A549 (cell line): ENCODE measurements at regions of chr18 and their contacts with region 1.

Region 1: DNA sequence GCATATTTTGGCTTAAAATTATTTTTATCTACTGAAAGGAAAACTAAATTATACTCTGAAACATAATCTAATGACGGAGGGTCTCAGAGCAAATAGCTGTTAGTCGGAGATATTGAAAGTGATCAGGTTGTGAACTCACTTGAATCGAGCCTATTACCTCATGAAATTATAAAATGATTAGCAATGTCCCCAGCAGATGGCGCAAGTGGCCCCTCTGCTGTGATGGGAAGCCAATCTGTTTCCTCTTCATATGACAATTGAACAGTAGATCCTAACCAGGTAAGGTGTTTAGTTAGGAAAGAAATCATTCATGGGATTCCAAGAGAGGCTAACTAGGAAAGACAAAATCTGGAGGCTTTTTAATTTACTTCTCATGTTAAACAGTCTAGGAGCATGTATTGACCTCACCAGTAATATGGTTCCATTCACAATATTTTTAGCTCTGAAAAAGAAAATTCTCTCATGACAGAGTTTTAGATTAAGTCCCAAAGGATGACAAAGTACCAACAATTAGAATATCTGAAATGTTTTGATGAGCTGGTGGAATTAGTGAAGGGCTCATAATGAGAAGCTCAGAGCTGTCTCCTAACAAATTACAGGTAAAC is 29.9 kb upstream of the MPPE1 start:
- DNase-seq: peak; percentile 58 to 69
- ATAC-seq: peak; percentile 54 to 81; a peak in 4 of 6 replicates
- H3K4me3 ChIP-seq: no peak overlapping the region
- H3K27ac ChIP-seq: peak overlapping the region in 1 of 2 experiments; percentile 55; a peak in 2 of 6 replicates
- H3K4me1 ChIP-seq: peaks cover 6% of the 10 kb centered on the region; the same call in 1 of the 3 replicates
- CTCF ChIP-seq: peak; percentile 74
- EP300 ChIP-seq: no peak
- POLR2A ChIP-seq: no peak
- RAD21 ChIP-seq: peak; percentile 85 to 86

Region 2: DNA sequence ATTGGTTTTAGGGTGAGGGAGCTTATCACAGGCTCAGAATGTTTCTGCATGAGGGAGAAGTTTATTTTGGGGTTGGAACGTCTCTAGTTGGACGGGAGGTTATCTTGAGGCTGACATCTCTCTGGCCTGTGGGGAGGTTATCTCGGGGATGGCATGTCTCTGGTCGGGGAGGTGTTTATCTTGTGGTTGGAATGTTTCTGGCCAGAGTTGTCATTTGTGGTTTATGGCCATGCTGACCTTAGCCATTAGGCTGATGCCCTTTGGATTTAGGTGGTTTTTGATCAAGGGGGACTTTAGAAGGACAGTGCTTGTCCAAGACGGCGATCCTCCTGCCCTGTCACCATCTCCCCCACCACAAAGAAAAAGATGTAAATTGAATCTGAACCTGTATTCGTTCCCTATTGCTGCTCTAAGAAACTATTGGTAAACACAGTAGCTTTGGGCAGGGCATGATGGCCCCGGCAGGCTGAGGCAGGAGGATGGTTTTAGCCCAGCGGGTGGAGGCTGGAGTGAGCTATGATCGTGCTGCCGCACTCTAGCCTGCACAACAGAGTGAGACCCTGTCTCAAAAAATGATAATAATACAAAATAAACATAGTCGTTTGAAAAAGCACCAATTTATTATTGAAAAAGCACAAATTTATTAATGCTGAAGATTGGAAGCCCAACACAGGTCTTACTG is 12.0 kb before region 1 on chr18:
- CTCF ChIA-PET with region 1: interaction called, 73 read pairs
- POLR2A ChIA-PET with region 1: interaction called, 3 read pairs
- DNase-seq: no peak
- ATAC-seq: no peak
- H3K4me3 ChIP-seq: no peak overlapping the region
- H3K27ac ChIP-seq: no peak overlapping the region
- H3K4me1 ChIP-seq: no peaks in the 10 kb centered on the region
- CTCF ChIP-seq: no peak
- EP300 ChIP-seq: no peak
- POLR2A ChIP-seq: no peak
- RAD21 ChIP-seq: no peak

Region 3: GRCh38 chr18:11963991-11964484 is 26.1 kb after region 1 on chr18:
- CTCF ChIA-PET with region 1: interaction called, 17 read pairs
- POLR2A ChIA-PET with region 1: no interaction called
- DNase-seq: peak in 1 of 2 experiments; percentile 40
- ATAC-seq: peak; percentile 73 to 81
- H3K4me3 ChIP-seq: no peak overlapping the region
- H3K27ac ChIP-seq: peak overlapping the region in 1 of 2 experiments; percentile 43; a peak in 2 of 6 replicates
- H3K4me1 ChIP-seq: peaks cover 19% of the 10 kb centered on the region
- CTCF ChIP-seq: no peak
- EP300 ChIP-seq: no peak
- POLR2A ChIP-seq: no peak
- RAD21 ChIP-seq: no peak

Region 4: GRCh38 chr18:12005538-12006487 is 67.8 kb after region 1 on chr18:
- CTCF ChIA-PET with region 1: interaction called, 23 read pairs
- POLR2A ChIA-PET with region 1: no interaction called
- DNase-seq: peak in 1 of 2 experiments; percentile 51
- ATAC-seq: peak; percentile 50 to 52; a peak in 4 of 6 replicates
- H3K4me3 ChIP-seq: no peak overlapping the region
- H3K27ac ChIP-seq: peak overlapping the region; percentile 32 to 56; a peak in 4 of 6 replicates
- H3K4me1 ChIP-seq: peaks cover 17% of the 10 kb centered on the region
- CTCF ChIP-seq: no peak
- EP300 ChIP-seq: no peak
- POLR2A ChIP-seq: no peak
- RAD21 ChIP-seq: no peak

Region 5: DNA sequence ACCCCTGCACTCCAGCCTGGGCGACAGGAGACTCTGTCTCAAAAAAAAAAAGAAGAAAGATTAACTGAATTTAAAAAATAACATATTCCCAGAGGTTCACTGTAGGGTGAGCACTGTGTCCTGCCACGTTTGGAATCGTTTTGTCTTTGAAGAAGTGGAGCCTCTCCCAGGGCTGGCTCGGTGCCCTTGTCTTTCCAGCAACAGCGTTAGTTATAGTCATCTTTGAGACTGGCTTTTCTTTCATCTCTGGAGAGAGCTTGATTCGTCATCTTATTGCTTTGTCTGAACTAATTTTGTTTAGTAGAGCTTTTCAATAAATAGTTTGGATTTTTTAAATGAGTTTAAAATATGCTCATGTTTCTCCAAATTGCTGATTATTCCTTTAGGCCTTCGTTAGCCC is 93.9 kb after region 1 on chr18:
- CTCF ChIA-PET with region 1: interaction called, 39 read pairs
- POLR2A ChIA-PET with region 1: no interaction called
- DNase-seq: no peak
- ATAC-seq: no peak
- H3K4me3 ChIP-seq: no peak overlapping the region
- H3K27ac ChIP-seq: no peak overlapping the region
- H3K4me1 ChIP-seq: no peaks in the 10 kb centered on the region
- CTCF ChIP-seq: no peak
- EP300 ChIP-seq: no peak
- POLR2A ChIP-seq: no peak
- RAD21 ChIP-seq: no peak